ENCODE measurements at regions of chr2 and their contacts with region 1.

Region 1: DNA sequence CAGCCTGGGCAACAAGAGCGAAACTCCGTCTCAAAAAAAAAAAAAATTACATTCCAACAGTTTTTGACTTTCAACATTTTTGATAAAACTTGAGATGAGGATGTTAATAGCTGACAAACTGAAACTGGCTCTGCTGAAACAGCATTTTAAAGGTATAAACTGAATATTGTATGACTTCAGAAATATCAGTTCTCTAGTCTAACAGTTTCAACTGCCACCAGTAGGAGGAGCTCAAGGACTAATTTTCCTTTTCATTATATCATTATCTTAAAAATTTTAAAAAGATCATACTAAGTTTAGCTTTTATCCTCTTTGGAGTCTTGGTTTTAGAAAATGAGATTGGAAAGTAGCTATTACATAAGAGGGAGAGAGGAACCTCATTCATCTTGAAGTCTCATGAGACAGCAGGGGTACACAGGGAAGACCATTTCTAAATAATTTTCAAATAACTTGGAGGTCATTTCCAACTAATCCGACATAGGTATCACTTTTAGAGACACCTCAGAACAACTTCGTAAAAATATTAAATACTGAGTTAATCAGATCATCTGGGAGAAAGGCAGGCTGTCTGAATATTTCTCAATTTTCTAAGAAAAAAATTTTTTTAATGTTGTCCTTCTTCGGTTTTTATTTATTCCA is 37.6 kb upstream of the MCM6 start:
- DNase-seq: peak; percentile 60
- H3K4me3 Mint-ChIP-seq: no peak overlapping the region
- H3K27ac Mint-ChIP-seq: no peak overlapping the region
- H3K4me1 Mint-ChIP-seq: no peaks in the 10 kb centered on the region
- H3K27me3 Mint-ChIP-seq: no peaks in the 10 kb centered on the region
- CTCF ChIP-seq: peak; percentile 76

Region 2: DNA sequence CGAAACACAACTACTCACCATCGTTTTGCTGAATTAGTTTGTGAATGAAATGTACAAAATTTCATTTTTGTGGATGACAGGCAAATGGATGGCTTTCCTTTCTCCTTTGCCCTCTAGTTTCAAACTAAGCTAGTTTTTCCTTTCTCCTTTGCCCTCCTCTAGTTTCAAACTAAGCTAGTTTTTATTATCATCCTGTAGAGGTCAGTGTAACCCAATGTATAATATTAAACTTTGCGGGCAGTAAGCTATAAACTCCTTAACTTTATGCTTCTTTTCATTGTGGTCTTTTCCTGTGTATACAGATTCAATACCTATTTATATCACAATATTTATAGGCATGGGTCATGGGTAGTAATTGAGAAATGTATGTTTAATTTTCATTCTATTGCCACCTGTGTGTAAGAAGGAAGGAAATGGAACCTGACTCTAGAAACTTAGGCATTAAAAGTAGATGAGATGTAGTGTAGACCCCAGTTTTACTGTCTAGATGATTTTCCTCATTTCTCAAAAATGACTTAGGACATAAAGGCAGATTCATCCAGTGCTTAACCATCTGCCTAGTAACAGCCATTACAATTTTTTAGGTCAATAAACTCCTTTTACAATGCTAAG is 924.7 kb before region 1 on chr2:
- CTCF ChIA-PET with region 1: interaction called, 3 read pairs
- POLR2A ChIA-PET with region 1: no interaction called
- intact Hi-C with region 1: loop called (anchors 2 kb)
- DNase-seq: peak; percentile 46
- H3K4me3 Mint-ChIP-seq: no peak overlapping the region
- H3K27ac Mint-ChIP-seq: no peak overlapping the region
- H3K4me1 Mint-ChIP-seq: no peaks in the 10 kb centered on the region
- H3K27me3 Mint-ChIP-seq: peaks cover 50% of the 10 kb centered on the region
- CTCF ChIP-seq: peak; percentile 46

Region 3: DNA sequence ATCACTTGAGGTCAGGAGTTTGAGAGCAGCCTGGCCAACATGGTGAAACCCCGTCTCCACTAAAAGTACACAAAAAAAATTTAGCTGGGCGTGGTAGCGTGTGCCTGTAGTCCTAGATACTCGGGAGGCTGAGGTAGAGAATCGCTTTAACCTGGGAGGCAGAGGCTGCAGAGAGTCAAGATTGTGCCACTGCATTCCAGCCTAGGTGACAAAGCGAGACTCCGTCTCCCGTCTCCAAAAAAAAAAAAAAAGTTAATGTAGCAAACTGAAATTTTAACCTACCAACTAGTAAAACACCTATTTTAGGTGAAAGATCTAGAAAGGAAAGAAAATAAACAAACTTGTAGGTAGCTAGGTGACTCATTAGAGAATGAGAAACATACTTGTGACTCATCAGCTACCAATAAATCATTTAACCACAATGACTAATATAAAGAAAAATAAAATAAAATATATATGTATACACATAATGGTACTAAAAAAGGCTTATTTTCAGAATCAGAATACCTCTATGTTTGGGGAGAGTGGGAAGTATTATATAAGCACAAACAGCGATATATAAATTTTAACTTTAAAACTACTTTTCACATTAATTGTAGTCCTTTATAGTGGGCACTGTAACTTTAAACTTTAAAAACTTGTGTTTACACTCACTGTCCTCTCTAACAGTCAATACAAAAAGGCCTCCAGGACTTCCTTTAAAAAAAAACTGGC is 35.0 kb after region 1 on chr2:
- CTCF ChIA-PET with region 1: interaction called, 10 read pairs
- POLR2A ChIA-PET with region 1: interaction called, 4 read pairs
- intact Hi-C with region 1: no loop called
- DNase-seq: peak; percentile 86
- H3K4me3 Mint-ChIP-seq: peak overlapping the region; percentile 68
- H3K27ac Mint-ChIP-seq: peak overlapping the region; percentile 97
- H3K4me1 Mint-ChIP-seq: peaks cover 36% of the 10 kb centered on the region
- H3K27me3 Mint-ChIP-seq: no peaks in the 10 kb centered on the region
- CTCF ChIP-seq: no peak

Region 4: DNA sequence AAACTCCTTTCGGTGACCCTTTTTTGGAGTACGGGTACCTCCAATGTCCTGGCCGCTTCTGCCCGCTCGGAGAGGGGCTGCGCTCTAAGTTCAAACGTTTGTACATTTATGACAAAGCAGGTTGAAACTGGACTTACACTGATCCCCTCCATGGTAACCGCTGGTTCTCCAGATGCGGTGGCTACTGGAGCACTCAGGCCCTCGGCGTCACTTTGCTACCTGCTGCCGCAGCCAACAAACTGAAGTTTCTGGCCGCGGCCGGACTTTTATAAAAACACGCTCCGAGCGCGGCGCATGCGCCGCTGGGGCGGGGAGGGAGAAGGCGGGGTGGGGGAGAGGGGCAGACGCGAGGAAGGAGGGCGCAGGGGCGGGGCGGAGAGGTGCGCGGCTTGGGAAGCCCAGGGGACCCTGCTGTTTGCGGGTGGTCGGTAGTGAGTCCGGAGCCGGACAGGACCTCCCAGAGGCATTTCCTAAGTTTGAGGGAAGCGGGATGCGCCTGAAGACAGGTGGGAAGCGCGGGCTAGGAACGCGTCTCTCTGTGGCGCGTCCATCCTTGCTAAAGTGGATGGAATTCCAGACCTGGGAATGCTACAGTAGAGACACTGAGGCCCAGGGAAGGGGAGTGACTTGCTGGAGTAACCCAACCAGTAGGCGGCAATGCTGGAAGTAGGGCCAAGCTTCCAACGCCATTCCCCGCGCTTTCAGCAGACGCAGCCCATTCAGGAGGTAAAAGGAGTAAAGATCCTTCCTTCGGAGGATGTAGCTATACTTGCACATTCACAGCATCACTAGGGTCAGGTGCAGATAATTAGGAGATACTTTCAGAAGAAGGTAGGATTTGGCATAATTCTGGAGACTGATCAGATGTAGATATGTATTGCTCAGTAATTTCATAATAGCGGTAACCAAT is 204.3 kb after region 1 on chr2 and contains the start of gene CXCR4:
- CTCF ChIA-PET with region 1: no interaction called
- POLR2A ChIA-PET with region 1: no interaction called
- intact Hi-C with region 1: loop called (anchors 5 kb)
- DNase-seq: peak; percentile 38
- H3K4me3 Mint-ChIP-seq: peak within 1 kb of the TSS; percentile 87
- H3K27ac Mint-ChIP-seq: no peak within 1 kb of the TSS
- H3K4me1 Mint-ChIP-seq: peaks cover 15% of the 10 kb centered on the region
- H3K27me3 Mint-ChIP-seq: no peaks in the 10 kb centered on the region
- CTCF ChIP-seq: no peak
- total RNA-seq, gene CXCR4: 0.54 and 1.1 TPM in 2 replicates

Region 5: DNA sequence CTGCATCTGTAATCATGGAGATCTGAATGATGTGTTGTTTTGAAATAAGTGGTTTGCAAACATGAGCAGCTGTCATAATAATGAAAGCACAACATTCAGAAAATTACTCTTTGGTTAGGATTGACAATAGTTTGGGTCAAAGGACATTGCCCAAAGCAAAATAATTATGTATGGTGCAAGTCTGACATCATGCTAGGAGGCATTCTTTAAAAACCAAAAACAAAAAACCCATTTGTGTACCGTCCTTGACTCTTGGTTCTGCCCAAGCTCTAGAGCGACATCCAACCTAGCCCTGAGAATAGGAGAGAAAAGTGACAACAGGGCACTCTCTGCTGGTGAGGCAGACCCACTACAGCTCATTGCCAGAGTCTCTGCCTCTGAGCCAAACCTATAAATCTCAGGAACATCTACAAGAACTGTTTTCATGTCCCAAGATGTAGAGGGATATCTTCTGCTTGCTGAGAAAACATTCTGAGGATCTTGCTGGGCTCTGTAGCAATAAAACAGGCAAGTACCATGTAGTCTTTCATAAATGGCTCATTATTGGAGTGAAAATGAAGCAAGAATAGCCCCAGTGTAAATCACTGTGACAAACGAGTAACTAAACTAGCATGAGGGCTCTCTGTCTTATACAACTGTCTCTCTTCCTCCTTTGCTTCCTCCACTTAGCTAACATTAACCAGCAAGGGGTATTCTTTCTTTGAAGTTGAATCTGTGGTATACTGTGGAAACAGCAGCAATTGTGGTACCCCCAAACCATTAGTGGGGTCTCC is 470.9 kb after region 1 on chr2:
- CTCF ChIA-PET with region 1: interaction called, 241 read pairs
- POLR2A ChIA-PET with region 1: interaction called, 4 read pairs
- intact Hi-C with region 1: no loop called
- DNase-seq: peak; percentile 56
- H3K4me3 Mint-ChIP-seq: no peak overlapping the region
- H3K27ac Mint-ChIP-seq: no peak overlapping the region
- H3K4me1 Mint-ChIP-seq: no peaks in the 10 kb centered on the region
- H3K27me3 Mint-ChIP-seq: peaks cover 13% of the 10 kb centered on the region
- CTCF ChIP-seq: peak; percentile 48

Region 6: DNA sequence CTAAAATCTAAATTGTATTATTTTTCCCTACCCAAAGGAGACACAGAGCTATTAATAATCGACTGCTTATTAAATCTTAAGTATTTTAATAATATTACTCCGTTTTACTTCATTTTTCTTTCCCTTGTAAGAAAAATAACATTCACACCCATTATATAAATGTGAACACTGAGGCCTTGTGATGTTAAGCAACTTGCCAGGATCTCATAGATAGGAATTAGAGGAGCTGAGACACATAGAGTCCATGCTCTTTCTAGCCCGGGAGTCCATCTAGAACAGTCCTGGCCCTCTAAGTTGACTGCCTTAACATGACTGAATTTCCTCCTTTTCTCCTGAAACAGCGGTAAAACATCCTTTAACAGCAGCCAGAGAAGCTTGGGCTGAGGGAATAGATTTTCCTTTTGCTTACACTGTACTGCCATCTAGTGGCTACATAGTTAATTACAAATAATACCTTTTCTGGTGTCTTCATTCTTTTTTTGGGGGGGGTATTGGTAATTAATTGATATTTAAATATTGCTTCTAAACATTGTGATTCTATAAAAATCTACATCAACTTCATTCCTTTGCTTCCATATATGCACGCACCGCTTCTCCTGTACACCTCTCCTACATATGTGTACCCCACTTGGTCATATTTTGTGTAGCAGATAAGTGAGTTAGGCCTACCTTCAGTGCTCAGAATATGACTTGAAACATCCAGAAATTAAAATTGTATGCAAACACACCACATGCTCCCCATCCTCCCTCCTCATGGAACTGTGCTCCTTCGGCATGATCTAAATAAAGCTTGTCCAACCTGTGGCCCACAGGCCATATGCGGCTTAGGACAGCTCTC is 1924.6 kb after region 1 on chr2:
- CTCF ChIA-PET with region 1: no interaction called
- POLR2A ChIA-PET with region 1: no interaction called
- intact Hi-C with region 1: loop called (anchors 5 kb)
- DNase-seq: peak; percentile 57
- H3K4me3 Mint-ChIP-seq: no peak overlapping the region
- H3K27ac Mint-ChIP-seq: no peak overlapping the region
- H3K4me1 Mint-ChIP-seq: no peaks in the 10 kb centered on the region
- H3K27me3 Mint-ChIP-seq: no peaks in the 10 kb centered on the region
- CTCF ChIP-seq: peak; percentile 57